Endothelial cell of umbilical vein (primary cell): ENCODE measurements at regions of chr10 and their contacts with region 1.

Region 1: GRCh38 chr10:121942749-121943416 is 15.1 kb upstream of the ATE1 start:
- DNase-seq: peak; percentile 97
- H3K4me3 ChIP-seq: no peak overlapping the region
- H3K27ac ChIP-seq: peak overlapping the region; percentile 69
- H3K4me1 ChIP-seq: peaks cover 23% of the 10 kb centered on the region
- H3K27me3 ChIP-seq: no peaks in the 10 kb centered on the region
- CTCF ChIP-seq: no peak
- POLR2A ChIP-seq: no peak

Region 2: GRCh38 chr10:121804460-121804859 is 138.4 kb before region 1 on chr10:
- CTCF ChIA-PET with region 1: no interaction called
- POLR2A ChIA-PET with region 1: no interaction called
- dilution Hi-C with region 1: no loop called
- intact Hi-C with region 1: no loop called
- DNase-seq: no peak
- H3K4me3 ChIP-seq: no peak overlapping the region
- H3K27ac ChIP-seq: no peak overlapping the region
- H3K4me1 ChIP-seq: no peaks in the 10 kb centered on the region
- H3K27me3 ChIP-seq: no peaks in the 10 kb centered on the region
- CTCF ChIP-seq: no peak
- POLR2A ChIP-seq: no peak

Region 3: GRCh38 chr10:121956111-121957061 is 13.5 kb after region 1 on chr10:
- CTCF ChIA-PET with region 1: interaction called, 5 read pairs
- POLR2A ChIA-PET with region 1: interaction called, 4 read pairs
- dilution Hi-C with region 1: no loop called
- intact Hi-C with region 1: loop called (anchors 1 kb)
- DNase-seq: peak; percentile 87
- H3K4me3 ChIP-seq: peak overlapping the region in 1 of 3 experiments; percentile 15
- H3K27ac ChIP-seq: peak overlapping the region; percentile 64
- H3K4me1 ChIP-seq: peaks cover 16% of the 10 kb centered on the region
- H3K27me3 ChIP-seq: no peaks in the 10 kb centered on the region
- CTCF ChIP-seq: no peak
- POLR2A ChIP-seq: no peak